ENCODE measurements at regions of chr11 and their contacts with region 1.

Region 1: GRCh38 chr11:112588252-112588694 is 327.6 kb upstream of the PLET1 start:
- DNase-seq: peak; percentile 11
- H3K4me3 Mint-ChIP-seq: no peak overlapping the region
- H3K27ac Mint-ChIP-seq: no peak overlapping the region
- H3K4me1 Mint-ChIP-seq: no peaks in the 10 kb centered on the region
- H3K27me3 Mint-ChIP-seq: peaks cover 6% of the 10 kb centered on the region

Region 2: DNA sequence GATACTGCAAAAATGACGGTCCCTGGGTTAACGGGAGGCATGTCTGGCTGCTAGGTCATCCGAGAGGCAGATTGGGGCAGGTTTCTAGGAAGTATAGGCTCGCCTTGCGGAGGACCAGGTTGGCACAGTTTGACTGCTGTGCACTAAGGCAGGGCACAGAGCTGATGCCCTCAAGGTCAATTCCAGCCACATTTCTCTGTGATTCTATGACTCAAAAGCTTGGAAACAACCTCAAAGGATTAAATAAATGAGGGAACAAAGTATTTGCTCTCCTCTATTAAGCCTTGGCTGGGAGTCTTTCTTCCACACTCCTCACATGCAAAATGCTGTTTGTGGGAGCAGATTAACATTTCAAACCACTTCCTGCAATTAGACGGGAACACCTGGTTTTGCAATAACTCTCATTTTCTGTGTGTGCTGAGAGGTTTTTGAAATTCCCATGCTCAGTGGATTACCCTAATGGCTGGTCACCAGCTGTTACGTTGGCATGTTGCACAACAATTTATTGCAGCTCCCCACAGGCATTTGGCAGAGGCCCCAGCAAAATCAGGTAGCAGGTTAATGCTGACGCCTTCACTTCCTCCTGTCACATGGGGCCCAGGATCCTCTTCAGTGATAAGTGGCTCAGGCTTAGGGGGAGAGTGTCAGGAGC is 266.6 kb before region 1 on chr11:
- intact Hi-C with region 1: no loop called
- DNase-seq: no peak
- H3K4me3 Mint-ChIP-seq: no peak overlapping the region
- H3K27ac Mint-ChIP-seq: no peak overlapping the region
- H3K4me1 Mint-ChIP-seq: peaks cover 2% of the 10 kb centered on the region
- H3K27me3 Mint-ChIP-seq: peaks cover 4% of the 10 kb centered on the region

Region 3: DNA sequence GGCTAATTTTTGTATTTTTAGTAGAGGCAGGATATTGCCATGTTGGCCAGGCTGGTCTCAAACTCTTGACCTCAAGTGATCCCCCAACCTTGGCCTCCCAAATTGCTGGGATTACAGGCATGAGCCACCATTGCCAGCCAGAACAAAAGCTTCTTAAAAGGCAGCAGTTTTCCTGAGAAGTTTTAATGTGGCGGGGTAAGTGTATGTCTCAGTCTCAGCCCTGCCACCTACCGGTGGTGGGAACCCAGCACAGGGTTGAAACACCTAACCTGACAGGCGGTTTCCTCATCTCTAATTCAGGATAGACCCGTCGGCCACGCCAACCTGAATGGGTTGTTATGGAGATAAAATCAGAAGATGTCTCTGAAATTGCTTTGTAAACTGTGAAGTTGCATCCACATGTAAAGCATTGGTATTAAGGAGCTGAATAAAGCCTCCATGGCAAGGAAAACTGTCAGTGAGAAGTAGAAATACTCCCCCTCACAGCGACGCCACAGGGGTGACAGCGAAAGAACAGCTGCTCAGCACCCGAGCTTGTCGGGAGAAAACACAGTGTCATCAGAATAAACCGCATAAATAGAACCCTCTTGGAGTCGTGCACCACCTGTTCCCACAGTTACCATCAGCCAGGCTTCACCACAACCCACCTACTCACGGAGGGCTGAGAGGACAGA is 207.0 kb after region 1 on chr11:
- intact Hi-C with region 1: loop called (anchors 2 kb)
- DNase-seq: no peak
- H3K4me3 Mint-ChIP-seq: no peak overlapping the region
- H3K27ac Mint-ChIP-seq: no peak overlapping the region
- H3K4me1 Mint-ChIP-seq: peaks cover 1% of the 10 kb centered on the region
- H3K27me3 Mint-ChIP-seq: no peaks in the 10 kb centered on the region